Activated CD4-positive, alpha-beta T cell treated with anti-CD3 and anti-CD28 coated beads for 36 hours (primary cell): ENCODE measurements at regions of chr2 and their contacts with region 1.

Region 1: GRCh38 chr2:203934041-203934492 is 2.5 kb upstream of the ICOS start:
- DNase-seq: peak; percentile 78
- ATAC-seq: peak; percentile 47
- H3K4me3 Mint-ChIP-seq: peak overlapping the region; percentile 69
- H3K27ac Mint-ChIP-seq: peak overlapping the region; percentile 96
- H3K4me1 Mint-ChIP-seq: peaks cover 61% of the 10 kb centered on the region
- H3K27me3 Mint-ChIP-seq: no peaks in the 10 kb centered on the region

Region 2: DNA sequence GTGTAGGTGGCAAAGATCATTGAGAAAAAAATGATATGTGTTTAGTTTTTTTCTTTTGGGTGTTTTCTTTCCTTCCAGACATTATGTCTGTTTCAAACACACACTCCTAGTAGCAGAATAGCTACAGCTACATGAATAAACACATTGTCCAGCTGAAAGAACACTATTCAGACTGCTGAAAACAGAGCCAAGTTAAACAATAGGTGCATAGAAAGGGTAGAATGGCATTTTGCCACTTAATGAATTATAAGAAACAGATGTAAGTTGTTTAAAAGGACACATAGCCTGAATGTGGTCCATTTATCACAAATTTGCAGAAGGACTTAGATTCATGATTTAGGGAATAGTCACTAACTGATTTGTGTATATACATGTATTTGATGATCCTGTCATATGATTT is 46.4 kb before region 1 on chr2:
- CTCF ChIA-PET with region 1: interaction called, 3 read pairs
- POLR2A ChIA-PET with region 1: interaction called, 7 read pairs
- intact Hi-C with region 1: loop called (anchors 1 to 2 kb)
- DNase-seq: no peak
- ATAC-seq: no peak
- H3K4me3 Mint-ChIP-seq: no peak overlapping the region
- H3K27ac Mint-ChIP-seq: peak overlapping the region; percentile 68
- H3K4me1 Mint-ChIP-seq: peaks cover 67% of the 10 kb centered on the region
- H3K27me3 Mint-ChIP-seq: peaks cover 4% of the 10 kb centered on the region

Region 3: DNA sequence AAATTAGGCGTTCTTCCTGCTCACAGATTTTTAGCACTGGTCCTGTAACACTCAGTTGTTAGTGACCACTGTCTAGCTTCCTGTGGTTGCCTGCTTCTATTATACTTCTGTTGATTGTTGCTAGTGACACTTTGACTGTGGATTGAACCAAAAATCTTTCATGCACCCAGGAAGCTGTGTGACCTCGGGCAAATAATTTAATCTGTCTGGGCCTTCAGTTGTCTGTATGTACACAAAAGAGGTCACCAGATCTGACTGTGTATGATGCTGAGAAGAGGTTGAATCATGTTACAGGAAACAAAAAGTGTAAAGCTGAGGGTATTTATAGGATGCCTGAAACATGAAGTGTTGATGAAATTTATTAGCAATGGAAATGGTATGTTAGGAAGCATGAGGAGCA is 15.2 kb after region 1 on chr2:
- CTCF ChIA-PET with region 1: interaction called, 5 read pairs
- POLR2A ChIA-PET with region 1: interaction called, 6 read pairs
- intact Hi-C with region 1: loop called in 1 of 2 experiments (anchors 2 kb)
- DNase-seq: no peak
- ATAC-seq: peak; percentile 59
- H3K4me3 Mint-ChIP-seq: peak overlapping the region; percentile 73
- H3K27ac Mint-ChIP-seq: peak overlapping the region; percentile 91
- H3K4me1 Mint-ChIP-seq: peaks cover 91% of the 10 kb centered on the region
- H3K27me3 Mint-ChIP-seq: no peaks in the 10 kb centered on the region

Region 4: DNA sequence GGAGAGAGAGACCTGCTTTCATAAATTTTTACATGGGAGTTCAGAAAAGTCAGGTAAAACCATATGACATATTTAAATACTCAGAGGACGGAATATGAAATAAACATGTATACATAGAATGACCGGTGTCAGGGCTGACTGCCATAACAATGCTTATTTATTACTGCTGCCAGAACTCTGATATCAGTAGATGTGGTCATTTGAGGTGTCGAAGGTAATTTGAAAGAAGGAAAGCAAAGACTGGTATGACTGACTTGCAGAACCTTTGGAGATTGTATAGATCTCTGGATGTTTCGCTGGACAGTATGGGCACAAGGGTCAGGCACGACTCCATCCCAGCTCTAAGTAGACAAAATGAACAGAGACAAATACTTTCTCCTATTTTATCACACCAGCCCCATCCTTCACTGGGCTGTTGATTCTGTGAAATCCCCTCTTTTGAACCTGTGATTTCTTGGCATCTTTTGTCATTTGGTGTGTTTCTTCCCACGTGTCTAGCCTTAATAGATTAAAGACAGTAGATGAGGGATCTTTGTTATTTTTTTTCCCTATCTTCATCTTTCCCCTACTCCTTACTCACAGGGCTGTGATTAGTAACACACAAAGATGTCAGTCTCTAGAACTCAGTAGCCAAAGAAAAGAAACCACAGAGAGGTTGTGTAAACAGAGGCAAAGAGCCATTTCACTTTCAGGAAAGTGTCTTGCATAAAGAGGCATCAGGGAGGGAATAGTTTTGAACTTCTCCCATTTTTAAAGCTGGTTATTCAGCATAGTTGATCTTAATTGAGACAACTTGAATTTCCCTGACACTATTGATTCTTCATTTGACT is 64.1 kb after region 1 on chr2:
- CTCF ChIA-PET with region 1: interaction called, 4 read pairs
- POLR2A ChIA-PET with region 1: no interaction called
- intact Hi-C with region 1: loop called in 1 of 2 experiments (anchors 2 kb)
- DNase-seq: no peak
- ATAC-seq: peak; percentile 73
- H3K4me3 Mint-ChIP-seq: peak overlapping the region; percentile 32
- H3K27ac Mint-ChIP-seq: peak overlapping the region; percentile 86
- H3K4me1 Mint-ChIP-seq: peaks cover 67% of the 10 kb centered on the region
- H3K27me3 Mint-ChIP-seq: no peaks in the 10 kb centered on the region

Region 5: DNA sequence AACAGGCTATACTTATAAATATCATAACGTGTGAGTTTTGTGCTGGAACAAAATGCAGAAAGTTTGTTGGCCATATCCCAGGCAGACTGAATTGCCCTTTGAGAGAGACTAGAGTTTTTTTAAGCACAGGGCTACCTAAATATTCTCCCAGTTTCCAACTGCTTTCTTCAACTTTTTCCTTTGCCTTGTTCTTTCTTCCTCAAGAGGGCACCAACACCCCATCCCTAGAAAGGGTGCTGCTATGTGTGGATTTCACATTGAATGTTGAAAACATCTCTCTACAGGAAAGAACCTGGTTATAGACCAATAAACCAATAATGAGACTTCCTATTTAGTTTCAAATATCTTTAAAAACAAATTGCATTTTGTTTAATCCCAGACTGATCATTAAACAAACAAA is 90.4 kb after region 1 on chr2:
- CTCF ChIA-PET with region 1: interaction called, 4 read pairs
- POLR2A ChIA-PET with region 1: no interaction called
- intact Hi-C with region 1: loop called (anchors 1 kb)
- DNase-seq: peak; percentile 50
- ATAC-seq: no peak
- H3K4me3 Mint-ChIP-seq: no peak overlapping the region
- H3K27ac Mint-ChIP-seq: no peak overlapping the region
- H3K4me1 Mint-ChIP-seq: peaks cover 52% of the 10 kb centered on the region
- H3K27me3 Mint-ChIP-seq: no peaks in the 10 kb centered on the region